ENCODE measurements at regions of chr6 and their contacts with region 1.

Region 1: GRCh38 chr6:83057705-83058321 is 7.8 kb downstream of the UBE3D start:
- DNase-seq: peak in 1 of 2 experiments; percentile 44
- H3K4me3 ChIP-seq: no peak overlapping the region
- H3K27ac ChIP-seq: no peak overlapping the region
- H3K4me1 ChIP-seq: no peaks in the 10 kb centered on the region
- H3K27me3 ChIP-seq: no peaks in the 10 kb centered on the region
- CTCF ChIP-seq: peak; percentile 64

Region 2: DNA sequence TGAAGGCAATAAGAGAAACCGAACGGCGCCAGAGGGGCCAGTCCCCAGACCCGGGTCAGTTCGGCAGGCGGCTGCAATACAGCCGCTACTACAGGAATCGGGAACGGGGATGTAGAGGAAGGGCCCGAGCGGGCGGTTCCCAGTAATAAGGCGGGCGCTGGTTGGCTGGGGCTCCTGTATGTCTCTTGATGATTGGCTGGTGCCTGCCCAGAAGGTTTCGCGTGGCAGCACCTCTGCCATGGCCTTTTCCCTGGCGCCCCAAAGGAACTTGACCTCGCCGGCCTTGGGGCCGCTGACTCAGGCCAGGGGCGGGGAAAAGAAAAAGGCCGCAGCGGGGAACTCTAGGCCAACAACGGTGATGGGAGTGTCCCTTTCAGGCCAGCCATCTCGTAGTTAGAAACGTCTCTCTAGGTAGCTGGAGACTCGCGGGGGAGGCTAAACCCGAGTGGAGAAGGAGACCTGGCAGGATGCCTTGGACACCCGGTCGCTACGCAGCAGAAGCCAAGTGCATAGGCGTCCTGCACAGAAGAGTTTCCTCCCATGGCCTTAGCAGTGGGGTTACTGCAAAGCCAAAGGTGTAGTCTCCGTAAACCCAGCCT is 810.1 kb before region 1 on chr6 and contains the start of gene IBTK:
- CTCF ChIA-PET with region 1: interaction called, 4 read pairs
- POLR2A ChIA-PET with region 1: no interaction called
- intact Hi-C with region 1: loop called (anchors 1 kb)
- DNase-seq: peak; percentile 85 to 96
- H3K4me3 ChIP-seq: peak within 1 kb of the TSS; percentile 90
- H3K27ac ChIP-seq: peak within 1 kb of the TSS; percentile 89
- H3K4me1 ChIP-seq: peaks cover 19% of the 10 kb centered on the region
- H3K27me3 ChIP-seq: no peaks in the 10 kb centered on the region
- CTCF ChIP-seq: no peak
- total RNA-seq, gene IBTK: 23.1 and 25.9 TPM in 2 replicates

Region 3: GRCh38 chr6:82270881-82271645 is 786.8 kb before region 1 on chr6:
- CTCF ChIA-PET with region 1: no interaction called
- POLR2A ChIA-PET with region 1: no interaction called
- intact Hi-C with region 1: loop called (anchors 1 kb)
- DNase-seq: peak in 1 of 2 experiments; percentile 35
- H3K4me3 ChIP-seq: no peak overlapping the region
- H3K27ac ChIP-seq: no peak overlapping the region
- H3K4me1 ChIP-seq: no peaks in the 10 kb centered on the region
- H3K27me3 ChIP-seq: no peaks in the 10 kb centered on the region
- CTCF ChIP-seq: peak; percentile 74

Region 4: DNA sequence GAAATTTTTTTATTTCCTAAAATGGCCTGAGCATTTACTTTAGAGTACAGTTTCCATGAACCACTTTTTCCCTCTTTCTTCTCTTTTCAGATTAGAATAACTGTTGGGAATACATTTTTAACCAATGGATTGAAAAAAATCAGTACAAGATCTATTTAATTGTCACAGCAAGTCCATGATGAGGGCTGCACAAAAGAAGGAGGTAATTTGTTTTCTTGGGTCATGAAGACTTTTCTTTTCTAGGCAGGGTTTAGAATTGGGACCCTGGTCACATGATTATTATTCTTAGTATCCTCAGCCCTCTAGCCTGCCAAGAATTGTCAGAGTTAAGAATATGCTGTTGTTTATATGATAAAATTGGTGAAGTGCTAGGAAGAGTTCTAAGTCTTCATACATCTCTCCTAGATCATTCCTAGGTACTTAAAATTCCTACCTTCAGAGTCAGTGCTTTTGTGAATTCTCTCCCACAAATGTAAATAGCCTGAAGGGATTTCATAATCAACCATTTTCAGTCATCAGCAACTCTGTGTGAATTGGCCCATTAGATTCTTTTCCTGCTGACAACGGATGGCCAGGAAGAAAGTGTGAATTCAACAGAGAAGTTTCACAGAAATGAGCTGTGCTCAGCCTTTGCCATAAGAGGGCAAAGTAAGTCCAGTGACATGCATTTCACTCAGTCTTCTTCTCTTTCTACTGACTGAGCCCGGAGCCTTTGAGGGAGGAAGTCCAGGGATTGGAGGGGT is 726.6 kb before region 1 on chr6:
- CTCF ChIA-PET with region 1: no interaction called
- POLR2A ChIA-PET with region 1: no interaction called
- intact Hi-C with region 1: loop called (anchors 1 kb)
- DNase-seq: peak; percentile 30 to 89
- H3K4me3 ChIP-seq: no peak overlapping the region
- H3K27ac ChIP-seq: peak overlapping the region; percentile 24
- H3K4me1 ChIP-seq: peaks cover 21% of the 10 kb centered on the region
- H3K27me3 ChIP-seq: no peaks in the 10 kb centered on the region
- CTCF ChIP-seq: no peak

Region 5: GRCh38 chr6:82589509-82590206 is 468.2 kb before region 1 on chr6:
- CTCF ChIA-PET with region 1: no interaction called
- POLR2A ChIA-PET with region 1: no interaction called
- intact Hi-C with region 1: loop called (anchors 2 kb)
- DNase-seq: peak; percentile 6 to 62
- H3K4me3 ChIP-seq: no peak overlapping the region
- H3K27ac ChIP-seq: no peak overlapping the region
- H3K4me1 ChIP-seq: peaks cover 18% of the 10 kb centered on the region; the same call in 1 of the 2 replicates
- H3K27me3 ChIP-seq: no peaks in the 10 kb centered on the region
- CTCF ChIP-seq: peak; percentile 42; the same call in 1 of the 2 replicates

Region 6: GRCh38 chr6:82875573-82876185 is 182.1 kb before region 1 on chr6:
- CTCF ChIA-PET with region 1: no interaction called
- POLR2A ChIA-PET with region 1: no interaction called
- intact Hi-C with region 1: loop called (anchors 2 kb)
- DNase-seq: peak; percentile 56 to 84
- H3K4me3 ChIP-seq: no peak overlapping the region
- H3K27ac ChIP-seq: peak overlapping the region; percentile 43
- H3K4me1 ChIP-seq: peaks cover 23% of the 10 kb centered on the region
- H3K27me3 ChIP-seq: no peaks in the 10 kb centered on the region
- CTCF ChIP-seq: no peak

Measured in PC-9 (cell line).